ENCODE measurements at regions of chr3 and their contacts with region 1.

Region 1: GRCh38 chr3:149589332-149589731 is 68.5 kb downstream of the WWTR1 start:
- DNase-seq: peak; percentile 95
- H3K4me3 ChIP-seq: peak overlapping the region in 1 of 3 experiments; percentile 10
- H3K27ac ChIP-seq: peak overlapping the region; percentile 96
- H3K4me1 ChIP-seq: peaks cover 96% of the 10 kb centered on the region
- H3K27me3 ChIP-seq: no peaks in the 10 kb centered on the region
- CTCF ChIP-seq: no peak
- POLR2A ChIP-seq: peak; percentile 38

Region 2: GRCh38 chr3:149603126-149604074 is 14.1 kb after region 1 on chr3:
- CTCF ChIA-PET with region 1: interaction called, 6 read pairs
- POLR2A ChIA-PET with region 1: no interaction called
- dilution Hi-C with region 1: no loop called
- intact Hi-C with region 1: loop called (anchors 1 kb)
- DNase-seq: no peak
- H3K4me3 ChIP-seq: no peak overlapping the region
- H3K27ac ChIP-seq: peak overlapping the region; percentile 83
- H3K4me1 ChIP-seq: peaks cover 93% of the 10 kb centered on the region
- H3K27me3 ChIP-seq: no peaks in the 10 kb centered on the region
- CTCF ChIP-seq: no peak
- POLR2A ChIP-seq: no peak

Region 3: GRCh38 chr3:149621218-149622005 is 32.1 kb after region 1 on chr3:
- CTCF ChIA-PET with region 1: interaction called, 3 read pairs
- POLR2A ChIA-PET with region 1: interaction called, 3 read pairs
- dilution Hi-C with region 1: no loop called
- intact Hi-C with region 1: loop called (anchors 1 kb)
- DNase-seq: peak; percentile 90
- H3K4me3 ChIP-seq: peak overlapping the region in 1 of 3 experiments; percentile 13
- H3K27ac ChIP-seq: peak overlapping the region; percentile 99
- H3K4me1 ChIP-seq: peaks cover 75% of the 10 kb centered on the region
- H3K27me3 ChIP-seq: no peaks in the 10 kb centered on the region
- CTCF ChIP-seq: no peak
- POLR2A ChIP-seq: peak; percentile 47